Ovary (tissue), 10 donors: ENCODE measurements at regions of chr2 and their contacts with region 1.

Region 1: GRCh38 chr2:197804049-197804757 is at the start of gene PLCL1:
- DNase-seq: peak; percentile 89 to 92 (median 90)
- H3K4me3 ChIP-seq: peak within 1 kb of the TSS; percentile 87
- H3K27ac ChIP-seq: peak within 1 kb of the TSS; percentile 41 to 81
- H3K4me1 ChIP-seq: no peaks in the 10 kb centered on the region
- H3K27me3 ChIP-seq: no peaks in the 10 kb centered on the region
- CTCF ChIP-seq: peak in 1 of 3 donors; percentile 33
- EP300 ChIP-seq: no peak
- POLR2A ChIP-seq: no peak
- total RNA-seq, gene PLCL1: 8.4 to 17.9 (median 11.6) TPM

Region 2: DNA sequence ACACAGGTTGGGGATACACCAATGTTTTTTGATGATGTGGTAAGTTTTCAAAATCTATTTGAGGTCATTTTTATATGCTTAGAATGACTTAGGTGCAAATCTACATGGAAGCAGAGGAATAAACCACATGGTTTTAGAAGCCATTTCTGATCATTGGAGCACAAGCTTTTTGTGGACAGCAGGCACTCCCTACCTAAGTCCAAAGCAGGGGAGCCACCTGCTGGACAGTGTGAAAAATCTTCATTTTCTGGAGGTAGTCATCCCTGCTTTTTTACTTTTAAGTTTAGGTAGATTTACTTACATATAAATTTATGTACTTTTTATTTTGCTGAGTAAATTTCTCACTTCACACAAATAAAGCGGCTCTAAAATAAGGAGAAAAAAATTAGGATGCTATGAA is 323.4 kb after region 1 on chr2:
- intact Hi-C with region 1: loop called (anchors 2 to 10 kb)
- DNase-seq: peak; percentile 24 to 56 (median 40)
- H3K4me3 ChIP-seq: no peak overlapping the region
- H3K27ac ChIP-seq: no peak overlapping the region
- H3K4me1 ChIP-seq: no peaks in the 10 kb centered on the region
- H3K27me3 ChIP-seq: no peaks in the 10 kb centered on the region
- CTCF ChIP-seq: peak; percentile 16 to 53 (median 27)
- EP300 ChIP-seq: no peak
- POLR2A ChIP-seq: no peak

Region 3: GRCh38 chr2:198135481-198135934 is 331.3 kb after region 1 on chr2:
- intact Hi-C with region 1: loop called in 1 of 4 experiments (anchors 10 kb)
- DNase-seq: no peak
- H3K4me3 ChIP-seq: no peak overlapping the region
- H3K27ac ChIP-seq: no peak overlapping the region
- H3K4me1 ChIP-seq: no peaks in the 10 kb centered on the region
- H3K27me3 ChIP-seq: no peaks in the 10 kb centered on the region
- CTCF ChIP-seq: no peak
- EP300 ChIP-seq: no peak
- POLR2A ChIP-seq: no peak

Region 4: DNA sequence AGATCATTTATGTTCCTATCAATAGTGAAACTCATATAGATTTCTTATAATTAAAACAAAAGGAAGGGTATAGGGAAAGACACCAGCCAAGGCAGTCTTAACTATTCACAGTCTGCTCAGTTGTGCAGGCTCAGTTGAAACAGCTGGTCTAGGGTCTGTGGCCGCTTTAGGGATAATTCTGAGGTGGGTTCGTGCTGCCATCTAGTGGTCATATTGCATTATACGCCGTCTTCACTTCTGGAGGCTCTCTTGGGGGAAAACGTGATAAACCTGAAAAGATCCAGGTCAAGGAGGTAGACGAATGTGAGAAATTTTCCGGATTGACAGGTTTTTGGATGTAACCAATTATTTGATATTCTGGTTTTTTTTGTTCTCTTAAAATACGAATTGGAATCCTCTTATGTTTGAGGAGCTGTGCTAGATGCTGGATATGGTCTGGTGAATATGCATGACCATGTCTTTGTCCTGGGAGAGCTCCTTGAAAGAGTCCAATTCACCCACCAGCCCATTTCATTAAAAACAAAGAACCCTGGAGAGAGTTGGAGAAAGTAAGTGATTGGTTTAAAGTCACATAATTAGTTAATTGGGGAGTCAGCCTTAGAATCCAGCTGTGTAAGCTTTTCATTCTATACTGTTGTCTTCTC is 492.6 kb after region 1 on chr2:
- intact Hi-C with region 1: loop called (anchors 2 to 5 kb)
- DNase-seq: peak; percentile 45 to 67 (median 52)
- H3K4me3 ChIP-seq: no peak overlapping the region
- H3K27ac ChIP-seq: no peak overlapping the region
- H3K4me1 ChIP-seq: no peaks in the 10 kb centered on the region
- H3K27me3 ChIP-seq: no peaks in the 10 kb centered on the region
- CTCF ChIP-seq: peak; percentile 50 to 74 (median 71)
- EP300 ChIP-seq: no peak
- POLR2A ChIP-seq: no peak